MCF 10A (cell line): ENCODE measurements at regions of chr5 and their contacts with region 1.

Region 1: GRCh38 chr5:159515909-159516415 is 185.7 kb upstream of the IL12B start:
- DNase-seq: peak; percentile 88
- H3K4me3 Mint-ChIP-seq: no peak overlapping the region
- H3K27ac Mint-ChIP-seq: no peak overlapping the region
- H3K4me1 Mint-ChIP-seq: peaks cover 19% of the 10 kb centered on the region
- H3K27me3 Mint-ChIP-seq: no peaks in the 10 kb centered on the region
- CTCF ChIP-seq: peak; percentile 97

Region 2: GRCh38 chr5:158135682-158136179 is 1380.2 kb before region 1 on chr5:
- CTCF ChIA-PET with region 1: no interaction called
- POLR2A ChIA-PET with region 1: no interaction called
- intact Hi-C with region 1: no loop called
- DNase-seq: no peak
- H3K4me3 Mint-ChIP-seq: no peak overlapping the region
- H3K27ac Mint-ChIP-seq: no peak overlapping the region
- H3K4me1 Mint-ChIP-seq: peaks cover 7% of the 10 kb centered on the region
- H3K27me3 Mint-ChIP-seq: no peaks in the 10 kb centered on the region
- CTCF ChIP-seq: no peak

Region 3: GRCh38 chr5:159451197-159452052 is 64.5 kb before region 1 on chr5:
- CTCF ChIA-PET with region 1: interaction called, 13 read pairs
- POLR2A ChIA-PET with region 1: no interaction called
- intact Hi-C with region 1: no loop called
- DNase-seq: peak; percentile 97
- H3K4me3 Mint-ChIP-seq: no peak overlapping the region
- H3K27ac Mint-ChIP-seq: peak overlapping the region; percentile 4
- H3K4me1 Mint-ChIP-seq: peaks cover 33% of the 10 kb centered on the region
- H3K27me3 Mint-ChIP-seq: no peaks in the 10 kb centered on the region
- CTCF ChIP-seq: no peak

Region 4: GRCh38 chr5:159531554-159532105 is 15.7 kb after region 1 on chr5:
- CTCF ChIA-PET with region 1: interaction called, 21 read pairs
- POLR2A ChIA-PET with region 1: interaction called, 3 read pairs
- intact Hi-C with region 1: no loop called
- DNase-seq: no peak
- H3K4me3 Mint-ChIP-seq: no peak overlapping the region
- H3K27ac Mint-ChIP-seq: no peak overlapping the region
- H3K4me1 Mint-ChIP-seq: peaks cover 8% of the 10 kb centered on the region
- H3K27me3 Mint-ChIP-seq: no peaks in the 10 kb centered on the region
- CTCF ChIP-seq: peak; percentile 38

Region 5: DNA sequence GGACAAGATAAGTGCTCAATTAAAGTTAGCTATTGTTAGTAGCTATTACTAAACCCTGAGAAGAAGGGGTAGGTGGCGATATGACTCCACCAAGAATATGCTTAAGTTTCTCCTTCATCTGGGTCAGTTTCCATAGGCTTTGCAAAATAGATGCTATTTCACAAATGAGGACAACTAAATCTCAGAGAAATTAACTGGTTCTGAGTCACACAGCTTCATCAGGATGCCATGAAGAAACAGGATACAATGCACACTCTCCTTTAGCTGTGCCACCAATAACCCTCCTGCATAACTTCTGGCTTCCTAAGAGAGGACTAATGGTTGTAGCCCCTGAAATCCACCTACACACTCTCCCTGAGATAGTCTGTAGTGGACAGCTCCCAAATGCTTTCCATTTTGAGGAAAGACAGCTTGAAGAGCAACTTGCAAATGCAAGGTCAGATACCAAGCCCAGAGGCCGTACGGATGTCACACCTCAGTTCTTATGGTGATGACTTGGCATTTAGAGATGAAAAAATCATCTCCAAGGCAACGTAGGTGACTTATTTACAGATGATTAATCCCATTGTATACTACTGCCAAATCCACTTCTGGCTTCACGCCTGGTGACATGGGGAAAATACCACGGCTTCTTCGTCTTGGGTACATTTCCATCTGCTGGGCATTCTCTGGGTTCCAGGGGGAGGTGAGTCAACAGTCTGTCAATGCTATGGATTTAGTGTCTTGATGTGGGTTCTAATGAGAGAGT is 65.7 kb after region 1 on chr5:
- CTCF ChIA-PET with region 1: interaction called, 26 read pairs
- POLR2A ChIA-PET with region 1: interaction called, 4 read pairs
- intact Hi-C with region 1: loop called (anchors 1 kb)
- DNase-seq: peak; percentile 100
- H3K4me3 Mint-ChIP-seq: no peak overlapping the region
- H3K27ac Mint-ChIP-seq: peak overlapping the region; percentile 91
- H3K4me1 Mint-ChIP-seq: peaks cover 29% of the 10 kb centered on the region
- H3K27me3 Mint-ChIP-seq: no peaks in the 10 kb centered on the region
- CTCF ChIP-seq: no peak

Region 6: GRCh38 chr5:159773062-159773924 is 257.3 kb after region 1 on chr5:
- CTCF ChIA-PET with region 1: interaction called, 3 read pairs
- POLR2A ChIA-PET with region 1: no interaction called
- intact Hi-C with region 1: loop called (anchors 5 kb)
- DNase-seq: peak; percentile 93
- H3K4me3 Mint-ChIP-seq: peak overlapping the region; percentile 58
- H3K27ac Mint-ChIP-seq: no peak overlapping the region
- H3K4me1 Mint-ChIP-seq: peaks cover 8% of the 10 kb centered on the region
- H3K27me3 Mint-ChIP-seq: no peaks in the 10 kb centered on the region
- CTCF ChIP-seq: no peak

Region 7: DNA sequence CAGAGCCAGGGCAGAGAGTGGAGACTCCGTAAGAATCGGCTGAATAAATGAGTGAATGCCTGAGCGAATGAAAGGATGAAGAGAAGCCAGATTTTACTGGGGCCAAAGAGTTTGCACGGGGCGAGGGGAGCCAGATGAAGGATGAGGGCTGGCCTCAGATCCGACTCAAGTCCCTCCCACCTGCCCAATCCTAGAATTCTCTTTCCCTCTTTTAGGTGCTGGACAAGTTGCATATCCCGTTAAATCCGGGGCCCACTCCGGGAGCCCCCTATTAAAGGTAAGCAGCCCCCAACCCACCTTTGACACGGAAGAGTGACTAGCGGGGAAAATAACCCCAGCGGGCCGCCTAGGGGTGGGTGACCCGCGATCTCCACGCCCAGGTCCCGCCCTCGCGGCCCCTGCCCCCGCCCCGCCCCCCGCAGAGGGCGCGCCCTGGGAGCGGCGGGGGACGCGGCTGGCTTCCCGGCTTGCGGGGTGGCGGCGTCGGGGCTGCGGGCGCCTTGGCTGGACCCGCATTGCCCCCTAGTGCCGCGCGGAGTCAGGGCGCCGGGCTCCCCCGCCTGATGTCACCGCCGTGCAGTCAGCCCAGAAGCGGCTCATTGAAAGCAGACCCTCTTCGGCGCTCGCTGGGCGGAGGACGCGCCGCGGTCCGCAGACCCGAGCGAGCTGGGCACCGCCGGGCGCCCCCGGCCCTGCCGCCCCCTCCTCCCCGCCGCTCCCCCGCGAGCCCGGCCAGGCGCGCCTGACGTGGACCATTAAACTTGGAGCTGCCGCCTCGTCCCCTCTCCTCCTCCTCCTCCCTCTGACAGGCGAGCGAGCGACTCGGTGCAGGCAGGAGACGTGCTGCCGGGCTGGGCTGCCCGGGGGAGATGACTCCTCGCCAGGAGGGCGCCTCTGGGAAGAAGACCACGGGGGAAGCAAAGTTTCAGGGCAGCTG is 400.2 kb after region 1 on chr5 and contains the start of gene ADRA1B:
- CTCF ChIA-PET with region 1: interaction called, 7 read pairs
- POLR2A ChIA-PET with region 1: interaction called, 7 read pairs
- intact Hi-C with region 1: loop called (anchors 1 kb)
- DNase-seq: peak; percentile 55
- H3K4me3 Mint-ChIP-seq: peak within 1 kb of the TSS; percentile 44
- H3K27ac Mint-ChIP-seq: peak within 1 kb of the TSS; percentile 28
- H3K4me1 Mint-ChIP-seq: peaks cover 44% of the 10 kb centered on the region
- H3K27me3 Mint-ChIP-seq: no peaks in the 10 kb centered on the region
- CTCF ChIP-seq: peak; percentile 63
- total RNA-seq, gene ADRA1B: 0.14 TPM in 1 of 2 replicates, not detected in the other